ENCODE measurements at regions of chr3 and their contacts with region 1.

Region 1: GRCh38 chr3:40179016-40179415 is 130.5 kb upstream of the EIF1B start:
- DNase-seq: peak; percentile 80
- H3K4me3 Mint-ChIP-seq: no peak overlapping the region
- H3K27ac Mint-ChIP-seq: no peak overlapping the region
- H3K4me1 Mint-ChIP-seq: no peaks in the 10 kb centered on the region
- H3K27me3 Mint-ChIP-seq: no peaks in the 10 kb centered on the region
- CTCF ChIP-seq: peak; percentile 79

Region 2: GRCh38 chr3:39447637-39448483 is 731.2 kb before region 1 on chr3:
- CTCF ChIA-PET with region 1: interaction called, 9 read pairs
- POLR2A ChIA-PET with region 1: no interaction called
- intact Hi-C with region 1: loop called (anchors 1 kb)
- DNase-seq: peak; percentile 90
- H3K4me3 Mint-ChIP-seq: no peak overlapping the region
- H3K27ac Mint-ChIP-seq: no peak overlapping the region
- H3K4me1 Mint-ChIP-seq: peaks cover 7% of the 10 kb centered on the region
- H3K27me3 Mint-ChIP-seq: peaks cover under 1% of the 10 kb centered on the region
- CTCF ChIP-seq: peak; percentile 67

Region 3: DNA sequence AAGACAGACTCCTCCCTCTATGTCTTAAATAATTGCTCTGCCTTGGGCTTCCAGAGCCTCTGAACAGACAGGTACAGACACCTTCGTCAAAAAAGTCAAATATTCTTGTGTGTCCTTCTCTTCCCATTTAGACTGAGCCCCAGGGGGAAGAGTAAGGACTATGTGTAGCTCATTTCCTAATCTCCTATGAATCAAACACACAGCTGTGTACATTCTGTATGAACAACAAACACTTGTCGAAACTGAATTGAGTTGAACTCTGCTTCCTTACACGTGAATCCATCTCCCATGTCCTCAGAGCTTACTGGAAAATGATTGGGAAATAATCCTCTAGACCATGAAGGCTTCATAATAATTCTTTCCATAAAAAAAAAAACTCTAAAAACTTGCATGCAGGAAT is 630.7 kb before region 1 on chr3:
- CTCF ChIA-PET with region 1: interaction called, 106 read pairs
- POLR2A ChIA-PET with region 1: no interaction called
- intact Hi-C with region 1: no loop called
- DNase-seq: peak; percentile 89
- H3K4me3 Mint-ChIP-seq: peak overlapping the region; percentile 24
- H3K27ac Mint-ChIP-seq: peak overlapping the region; percentile 93
- H3K4me1 Mint-ChIP-seq: peaks cover 10% of the 10 kb centered on the region
- H3K27me3 Mint-ChIP-seq: no peaks in the 10 kb centered on the region
- CTCF ChIP-seq: no peak

Region 4: DNA sequence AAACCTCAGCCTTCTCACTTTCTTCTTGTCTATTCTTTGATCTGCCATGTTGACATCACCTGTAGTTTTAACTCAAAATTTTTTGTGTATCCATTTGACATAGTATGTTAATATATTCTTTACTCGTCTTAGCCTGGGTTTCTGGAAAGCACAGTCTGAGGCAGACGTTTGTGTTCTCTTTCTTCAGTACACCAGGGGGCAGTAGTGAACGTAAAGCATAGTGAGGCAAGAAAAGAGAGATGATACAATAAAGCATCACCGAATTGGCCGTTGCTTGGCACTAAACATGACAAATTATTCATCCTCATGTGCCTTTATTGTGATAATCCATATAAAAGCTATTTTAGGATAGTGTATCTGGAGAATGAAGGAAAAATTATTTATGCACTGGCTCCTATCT is 510.6 kb before region 1 on chr3:
- CTCF ChIA-PET with region 1: interaction called, 41 read pairs
- POLR2A ChIA-PET with region 1: no interaction called
- intact Hi-C with region 1: loop called (anchors 1 kb)
- DNase-seq: peak; percentile 73
- H3K4me3 Mint-ChIP-seq: no peak overlapping the region
- H3K27ac Mint-ChIP-seq: no peak overlapping the region
- H3K4me1 Mint-ChIP-seq: peaks cover 15% of the 10 kb centered on the region
- H3K27me3 Mint-ChIP-seq: no peaks in the 10 kb centered on the region
- CTCF ChIP-seq: peak; percentile 48

Region 5: GRCh38 chr3:39716849-39717248 is 462.2 kb before region 1 on chr3:
- CTCF ChIA-PET with region 1: interaction called, 54 read pairs
- POLR2A ChIA-PET with region 1: no interaction called
- intact Hi-C with region 1: no loop called
- DNase-seq: no peak
- H3K4me3 Mint-ChIP-seq: no peak overlapping the region
- H3K27ac Mint-ChIP-seq: no peak overlapping the region
- H3K4me1 Mint-ChIP-seq: no peaks in the 10 kb centered on the region
- H3K27me3 Mint-ChIP-seq: no peaks in the 10 kb centered on the region
- CTCF ChIP-seq: no peak

Region 6: GRCh38 chr3:39809181-39809994 is 369.6 kb before region 1 on chr3 and contains the start of gene MYRIP:
- CTCF ChIA-PET with region 1: interaction called, 45 read pairs
- POLR2A ChIA-PET with region 1: interaction called, 3 read pairs
- intact Hi-C with region 1: loop called (anchors 1 kb)
- DNase-seq: peak; percentile 36
- H3K4me3 Mint-ChIP-seq: peak within 1 kb of the TSS; percentile 69
- H3K27ac Mint-ChIP-seq: no peak within 1 kb of the TSS
- H3K4me1 Mint-ChIP-seq: peaks cover 11% of the 10 kb centered on the region
- H3K27me3 Mint-ChIP-seq: peaks cover 24% of the 10 kb centered on the region
- CTCF ChIP-seq: no peak
- total RNA-seq, gene MYRIP: 0.10 and 0.19 TPM in 2 replicates

Region 7: DNA sequence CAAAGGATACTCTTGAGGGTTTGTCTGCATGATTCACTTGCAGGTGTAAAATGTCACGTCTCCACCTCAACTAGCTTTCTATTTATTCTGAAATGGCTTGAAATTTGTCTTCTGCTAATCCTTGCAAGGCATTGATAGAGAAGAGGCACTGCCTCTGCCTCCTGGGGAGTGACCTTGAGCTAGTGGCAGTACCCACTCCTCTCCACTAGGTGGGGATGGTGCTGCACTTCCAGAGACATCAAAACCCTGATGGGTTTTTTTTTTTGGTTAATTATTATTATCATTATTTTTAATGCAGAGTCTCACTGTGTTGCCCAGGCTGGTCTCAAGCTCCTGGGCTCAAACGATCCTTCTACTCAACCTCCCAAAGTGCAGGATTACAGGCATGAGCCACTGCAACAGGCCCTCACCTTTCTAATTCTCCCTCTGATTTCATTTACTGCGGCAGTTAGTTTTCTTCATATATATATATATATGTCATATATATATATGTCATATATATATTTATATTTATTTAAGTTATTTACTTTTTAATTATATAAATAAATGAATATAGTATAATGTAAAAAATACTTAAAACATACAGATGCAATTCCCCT is 12.9 kb after region 1 on chr3:
- CTCF ChIA-PET with region 1: interaction called, 31 read pairs
- POLR2A ChIA-PET with region 1: no interaction called
- intact Hi-C with region 1: no loop called
- DNase-seq: peak; percentile 65
- H3K4me3 Mint-ChIP-seq: no peak overlapping the region
- H3K27ac Mint-ChIP-seq: no peak overlapping the region
- H3K4me1 Mint-ChIP-seq: peaks cover 4% of the 10 kb centered on the region
- H3K27me3 Mint-ChIP-seq: no peaks in the 10 kb centered on the region
- CTCF ChIP-seq: peak; percentile 96